ENCODE measurements at regions of chr20 and their contacts with region 1.

Region 1: GRCh38 chr20:2101865-2102584 is 398 bp downstream of the STK35 start:
- DNase-seq: peak; percentile 92 to 95 (median 94)
- H3K4me3 ChIP-seq: peak overlapping the region; percentile 33 to 98
- H3K4me3 Mint-ChIP-seq: peak overlapping the region; percentile 92 to 98 (median 96)
- H3K27ac ChIP-seq: peak overlapping the region; percentile 97
- H3K27ac Mint-ChIP-seq: peak overlapping the region; percentile 100
- H3K4me1 ChIP-seq: peaks cover 45% of the 10 kb centered on the region
- H3K4me1 Mint-ChIP-seq: peaks cover 30 to 59% (median 42%) of the 10 kb centered on the region in 4 donors
- H3K27me3 ChIP-seq: no peaks in the 10 kb centered on the region
- H3K27me3 Mint-ChIP-seq: peaks cover 0 to 2% of the 10 kb centered on the region in 2 donors

Region 2: DNA sequence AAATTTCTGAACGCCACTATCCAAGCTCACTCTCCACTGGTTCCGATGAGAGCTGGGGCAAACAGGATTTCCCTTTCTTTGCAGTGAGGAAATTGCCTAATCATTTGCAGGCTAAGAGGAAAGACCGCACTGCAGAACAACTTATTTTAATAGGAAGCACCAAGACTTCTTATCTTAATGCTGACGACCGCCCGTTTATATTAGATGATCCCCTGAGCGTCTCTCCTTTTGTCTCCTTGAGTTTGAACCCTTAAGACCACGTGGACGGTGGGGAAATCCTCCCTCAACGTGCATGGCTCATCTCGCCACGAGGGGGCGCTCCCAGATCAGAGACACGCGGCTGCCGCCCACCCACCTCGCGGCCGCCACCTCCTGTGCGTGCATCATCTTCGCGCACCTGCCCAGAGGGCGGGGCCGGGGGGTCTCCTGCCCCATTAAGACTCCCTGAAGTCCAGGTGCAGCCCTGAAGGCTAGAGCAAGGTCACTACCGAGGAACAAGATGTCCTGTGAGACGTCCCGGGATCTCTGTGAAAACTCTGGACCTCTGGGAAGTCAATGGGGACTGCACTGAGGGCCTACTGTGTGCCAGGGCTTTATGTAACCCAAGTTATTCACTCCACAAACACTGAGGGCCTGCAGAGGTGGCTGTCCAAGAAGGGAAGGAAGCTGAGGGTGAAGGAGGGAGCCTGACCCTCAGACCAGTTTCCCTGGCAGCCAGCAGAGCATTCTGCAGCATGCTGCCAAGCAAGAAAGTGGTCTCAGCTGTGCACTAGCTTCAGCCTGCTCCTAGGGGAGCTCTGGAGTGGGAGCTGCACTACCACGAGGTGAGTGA is 136.3 kb before region 1 on chr20:
- CTCF ChIA-PET with region 1: no interaction called
- POLR2A ChIA-PET with region 1: no interaction called
- intact Hi-C with region 1: loop called (anchors 5 kb)
- DNase-seq: peak; percentile 46 to 62 (median 54)
- H3K4me3 ChIP-seq: no peak overlapping the region
- H3K4me3 Mint-ChIP-seq: peak overlapping the region in 6 of 8 donors; percentile 11 to 62 (median 44)
- H3K27ac ChIP-seq: no peak overlapping the region
- H3K27ac Mint-ChIP-seq: no peak overlapping the region
- H3K4me1 ChIP-seq: peaks cover 10% of the 10 kb centered on the region
- H3K4me1 Mint-ChIP-seq: peaks cover 3 to 9% (median 5%) of the 10 kb centered on the region in 4 donors
- H3K27me3 ChIP-seq: no peaks in the 10 kb centered on the region
- H3K27me3 Mint-ChIP-seq: peaks cover 20 to 24% of the 10 kb centered on the region in 2 donors

Region 3: DNA sequence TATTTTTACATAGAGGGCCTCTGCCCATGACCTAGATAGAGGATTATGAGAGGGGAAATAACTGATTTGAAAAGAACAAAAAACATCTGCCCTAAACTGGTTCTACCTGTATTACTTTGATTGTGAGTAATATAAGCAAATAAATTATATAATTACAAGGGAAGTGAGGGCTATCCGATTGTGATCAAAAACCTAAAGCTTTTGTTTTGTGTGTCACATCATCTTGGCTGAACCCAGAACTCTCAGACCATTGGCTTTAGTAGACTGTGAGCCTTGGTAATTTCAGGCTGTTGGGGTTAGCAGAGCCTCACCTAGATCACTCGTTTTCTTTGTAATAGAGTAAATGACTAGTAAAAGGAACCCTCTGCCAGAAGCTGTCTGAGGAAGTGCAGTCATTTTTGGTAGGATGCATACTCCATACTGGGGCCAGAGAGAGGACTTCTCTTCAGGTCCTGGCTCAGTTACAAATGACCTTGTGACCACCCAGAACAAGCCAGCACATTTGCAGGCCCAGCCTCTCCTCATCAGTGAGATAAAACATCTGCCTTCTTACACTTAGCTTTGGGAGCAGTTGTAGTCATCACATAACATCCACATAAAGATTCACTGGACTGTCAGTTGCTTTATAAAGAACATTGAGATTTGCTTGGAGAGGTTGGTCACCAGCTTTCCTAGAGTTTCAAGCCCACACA is 13.1 kb after region 1 on chr20:
- CTCF ChIA-PET with region 1: interaction called, 5 read pairs
- POLR2A ChIA-PET with region 1: interaction called, 27 read pairs
- intact Hi-C with region 1: no loop called
- DNase-seq: no peak
- H3K4me3 ChIP-seq: no peak overlapping the region
- H3K4me3 Mint-ChIP-seq: peak overlapping the region in 6 of 8 donors; percentile 29 to 67 (median 41)
- H3K27ac ChIP-seq: no peak overlapping the region
- H3K27ac Mint-ChIP-seq: peak overlapping the region in 4 of 7 donors; percentile 0 to 84 (median 48)
- H3K4me1 ChIP-seq: peaks cover 68% of the 10 kb centered on the region
- H3K4me1 Mint-ChIP-seq: peaks cover 69 to 88% (median 79%) of the 10 kb centered on the region in 4 donors
- H3K27me3 ChIP-seq: no peaks in the 10 kb centered on the region
- H3K27me3 Mint-ChIP-seq: no peaks in the 10 kb centered on the region